HEK293T (cell line): ENCODE measurements at regions of chr14 and their contacts with region 1.

Region 1: GRCh38 chr14:72352012-72352411 is 419.8 kb downstream of the RGS6 start:
- DNase-seq: no peak

Region 2: DNA sequence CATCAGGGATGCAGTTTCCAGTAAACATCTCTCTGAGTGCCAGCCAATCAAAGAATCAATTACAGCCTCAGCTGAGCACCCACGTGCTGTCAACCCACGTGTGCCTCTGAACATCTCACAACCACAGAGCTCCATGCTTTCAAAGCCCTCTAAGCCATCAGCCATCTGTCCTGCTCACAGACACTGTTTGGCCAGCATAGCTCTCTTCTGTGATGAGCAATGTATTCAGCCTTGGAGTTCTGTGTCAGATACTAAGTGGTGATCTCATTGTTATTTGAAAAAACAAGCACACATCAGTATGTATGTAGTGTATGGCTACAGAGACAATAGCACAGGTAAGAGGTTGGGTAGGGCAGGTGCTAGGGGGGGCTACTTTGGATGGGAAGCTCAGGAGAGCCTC is 325.5 kb before region 1 on chr14:
- CTCF ChIA-PET with region 1: interaction called, 12 read pairs
- POLR2A ChIA-PET with region 1: no interaction called
- DNase-seq: no peak